K562 (cell line): ENCODE measurements at regions of chr1 and their contacts with region 1.

Region 1: DNA sequence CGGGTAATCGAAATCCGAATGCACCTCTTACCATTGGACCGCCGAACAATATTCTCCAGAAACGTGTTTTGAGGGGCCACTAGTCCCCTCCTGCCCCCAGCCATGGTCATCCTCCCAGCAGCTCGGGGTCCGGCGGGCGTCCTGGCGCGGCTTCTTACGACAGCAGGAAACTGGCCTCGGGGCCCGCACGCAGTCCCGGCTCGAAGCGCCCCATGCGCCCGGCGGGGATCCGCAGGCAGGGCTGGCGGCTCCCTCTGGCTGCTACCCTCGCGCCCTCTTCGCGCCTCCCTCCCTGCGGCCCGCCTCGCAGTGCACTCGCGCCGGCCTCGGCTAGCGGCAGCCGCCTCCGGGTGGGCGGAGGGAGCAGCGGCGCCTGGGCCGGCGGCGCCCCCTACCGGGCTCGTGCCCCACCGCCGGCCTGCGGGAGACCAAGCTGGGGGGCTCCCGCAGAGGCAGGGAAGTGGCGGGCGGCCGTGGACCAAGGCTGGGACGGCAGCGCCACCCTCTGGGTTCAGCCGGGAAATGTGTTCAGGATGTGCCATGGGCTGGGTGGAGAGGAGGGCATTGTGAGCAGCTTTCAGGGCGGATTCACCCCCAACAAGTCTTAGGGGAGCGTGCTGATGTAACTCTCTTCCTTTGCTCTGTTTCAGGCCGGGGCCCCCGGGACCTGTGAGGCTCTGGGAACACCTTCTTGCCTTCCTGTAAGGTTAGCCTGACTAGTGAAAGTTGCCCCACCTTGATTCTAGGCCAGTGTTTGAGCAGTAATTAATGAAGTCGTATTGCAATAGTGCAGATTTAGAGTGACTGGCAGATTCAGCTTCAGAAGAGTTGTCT is at the start of gene KCNH1:
- DNase-seq: peak; percentile 91 to 95 (median 94)
- ATAC-seq: peak; percentile 100
- H3K4me3 ChIP-seq: 0 out of 2 replicates have a peak within 1 kb of the TSS, but pooled peaks have one; percentile 17
- H3K27ac ChIP-seq: no peak within 1 kb of the TSS
- H3K4me1 ChIP-seq: peaks cover 0 to 12% of the 10 kb centered on the region in 2 experiments; a peak in 2 of 5 replicates
- H3K27me3 ChIP-seq: peaks cover 8 to 12% of the 10 kb centered on the region in 2 experiments
- CTCF ChIP-seq: peak; percentile 96 to 98 (median 97)
- EP300 ChIP-seq: no peak
- POLR2A ChIP-seq: no peak
- RAD21 ChIP-seq: peak; percentile 98 to 99
- polyA plus RNA-seq, gene KCNH1: not detected

Region 2: GRCh38 chr1:209860293-209860881 is 1273.7 kb before region 1 on chr1:
- CTCF ChIA-PET with region 1: interaction called, 5 read pairs
- POLR2A ChIA-PET with region 1: no interaction called
- in situ Hi-C with region 1: loop called (anchors 25 kb)
- intact Hi-C with region 1: no loop called
- DNase-seq: peak; percentile 84 to 92 (median 91)
- ATAC-seq: peak; percentile 99
- H3K4me3 ChIP-seq: no peak overlapping the region
- H3K27ac ChIP-seq: no peak overlapping the region
- H3K4me1 ChIP-seq: no peaks in the 10 kb centered on the region
- H3K27me3 ChIP-seq: peaks cover 2 to 14% of the 10 kb centered on the region in 2 experiments; a peak in 3 of 5 replicates
- CTCF ChIP-seq: peak; percentile 89 to 94 (median 91)
- EP300 ChIP-seq: no peak
- POLR2A ChIP-seq: no peak
- RAD21 ChIP-seq: peak; percentile 92 to 96

Region 3: GRCh38 chr1:210407207-210407886 is 726.7 kb before region 1 on chr1:
- CTCF ChIA-PET with region 1: interaction called, 18 read pairs
- POLR2A ChIA-PET with region 1: no interaction called
- in situ Hi-C with region 1: loop called (anchors 10 kb)
- intact Hi-C with region 1: loop called (anchors 1 kb)
- DNase-seq: peak; percentile 68 to 75 (median 71)
- ATAC-seq: peak; percentile 91
- H3K4me3 ChIP-seq: no peak overlapping the region
- H3K27ac ChIP-seq: no peak overlapping the region
- H3K4me1 ChIP-seq: no peaks in the 10 kb centered on the region
- H3K27me3 ChIP-seq: no peaks in the 10 kb centered on the region; a peak in 1 of 5 replicates
- CTCF ChIP-seq: peak; percentile 77 to 89 (median 89)
- EP300 ChIP-seq: no peak
- POLR2A ChIP-seq: no peak
- RAD21 ChIP-seq: peak; percentile 74 to 87

Region 4: DNA sequence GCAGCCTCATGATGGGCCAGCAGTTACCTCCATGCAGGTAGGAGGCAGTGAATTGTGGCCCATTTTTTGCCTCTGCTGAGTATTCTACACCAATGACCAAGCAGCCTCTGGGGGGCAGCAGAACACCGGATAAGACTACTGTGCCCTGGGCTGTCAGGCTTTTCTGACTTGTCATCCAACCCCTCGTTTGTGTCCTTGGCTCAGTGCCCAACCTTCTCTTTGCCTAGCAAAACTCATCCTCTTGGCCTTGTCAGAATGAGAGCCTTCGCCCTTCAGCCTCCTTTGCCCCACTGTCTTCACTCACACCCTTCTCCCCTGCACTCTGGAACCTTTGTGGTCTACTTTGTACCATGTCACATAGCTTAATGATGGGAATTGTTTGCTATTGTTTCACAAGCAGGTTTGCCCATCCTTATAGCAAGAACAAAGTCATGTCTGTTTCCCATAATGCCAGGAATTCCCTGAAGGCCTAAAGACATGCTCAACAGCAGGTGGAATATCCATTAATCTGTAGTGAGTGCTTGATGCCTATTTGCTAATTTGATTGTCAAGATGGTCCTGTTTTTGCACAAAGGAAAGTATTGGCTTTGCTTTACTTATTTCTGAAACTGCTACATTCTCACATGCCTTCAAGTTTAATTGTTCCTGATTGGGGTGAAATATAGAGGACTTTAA is 549.5 kb before region 1 on chr1:
- CTCF ChIA-PET with region 1: interaction called, 26 read pairs
- POLR2A ChIA-PET with region 1: no interaction called
- in situ Hi-C with region 1: no loop called
- intact Hi-C with region 1: loop called (anchors 1 kb)
- DNase-seq: peak; percentile 67 to 84 (median 74)
- ATAC-seq: peak; percentile 99
- H3K4me3 ChIP-seq: no peak overlapping the region
- H3K27ac ChIP-seq: no peak overlapping the region
- H3K4me1 ChIP-seq: no peaks in the 10 kb centered on the region; a peak in 1 of 5 replicates
- H3K27me3 ChIP-seq: no peaks in the 10 kb centered on the region
- CTCF ChIP-seq: peak; percentile 73 to 84 (median 80)
- EP300 ChIP-seq: no peak
- POLR2A ChIP-seq: no peak
- RAD21 ChIP-seq: peak; percentile 86 to 89

Region 5: DNA sequence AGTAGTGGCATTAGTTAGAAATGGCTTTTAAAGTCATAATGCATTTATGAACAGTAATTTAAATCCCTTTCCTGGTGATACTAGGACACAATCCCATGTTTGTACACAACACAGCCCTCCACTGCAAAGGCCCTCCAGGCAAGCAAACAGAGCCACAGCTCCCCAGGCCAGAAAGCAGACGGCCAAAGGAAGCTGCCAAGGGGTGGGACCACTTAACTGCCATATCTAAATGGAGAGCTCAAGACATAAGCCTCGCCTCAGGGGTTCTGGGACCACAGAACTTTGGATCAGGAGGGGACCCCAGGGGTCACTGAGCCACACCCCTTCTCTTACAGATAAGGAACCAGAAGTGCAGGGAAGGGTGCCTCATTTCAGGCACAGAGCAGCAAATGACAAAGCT is 189.8 kb before region 1 on chr1:
- CTCF ChIA-PET with region 1: no interaction called
- POLR2A ChIA-PET with region 1: no interaction called
- in situ Hi-C with region 1: no loop called
- intact Hi-C with region 1: loop called (anchors 10 kb)
- DNase-seq: no peak
- ATAC-seq: no peak
- H3K4me3 ChIP-seq: no peak overlapping the region
- H3K27ac ChIP-seq: no peak overlapping the region
- H3K4me1 ChIP-seq: no peaks in the 10 kb centered on the region
- H3K27me3 ChIP-seq: peaks cover 0 to 5% of the 10 kb centered on the region in 2 experiments; a peak in 2 of 5 replicates
- CTCF ChIP-seq: no peak
- EP300 ChIP-seq: no peak
- POLR2A ChIP-seq: no peak
- RAD21 ChIP-seq: no peak

Region 6: DNA sequence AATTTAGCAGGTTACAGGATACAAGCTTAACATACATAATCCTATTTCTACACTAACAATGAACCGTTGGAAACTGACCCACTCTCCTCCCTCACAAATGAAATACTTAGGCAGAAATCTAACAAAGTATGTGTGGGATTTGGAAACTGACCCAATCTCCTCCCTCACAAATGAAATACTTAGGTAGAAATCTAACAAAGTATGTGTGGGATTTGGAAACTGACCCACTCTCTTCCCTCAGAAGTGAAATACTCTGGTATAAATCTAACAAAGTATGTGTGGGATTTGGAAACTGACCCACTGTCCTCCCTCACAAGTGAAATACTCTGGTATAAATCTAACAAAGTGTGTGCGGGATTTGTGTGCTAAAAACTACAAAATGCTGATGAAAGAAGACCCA is 252.9 kb after region 1 on chr1:
- CTCF ChIA-PET with region 1: no interaction called
- POLR2A ChIA-PET with region 1: no interaction called
- in situ Hi-C with region 1: no loop called
- intact Hi-C with region 1: no loop called
- DNase-seq: no peak
- ATAC-seq: no peak
- H3K4me3 ChIP-seq: no peak overlapping the region
- H3K27ac ChIP-seq: no peak overlapping the region
- H3K4me1 ChIP-seq: peaks cover under 1 to 4% of the 10 kb centered on the region in 2 experiments; a peak in 2 of 5 replicates
- H3K27me3 ChIP-seq: no peaks in the 10 kb centered on the region
- CTCF ChIP-seq: no peak
- EP300 ChIP-seq: no peak
- POLR2A ChIP-seq: no peak
- RAD21 ChIP-seq: no peak

Region 7: GRCh38 chr1:211476200-211476849 is 342.3 kb after region 1 on chr1:
- CTCF ChIA-PET with region 1: no interaction called
- POLR2A ChIA-PET with region 1: no interaction called
- in situ Hi-C with region 1: no loop called
- intact Hi-C with region 1: loop called (anchors 10 kb)
- DNase-seq: peak; percentile 77 to 87 (median 80)
- ATAC-seq: peak; percentile 91
- H3K4me3 ChIP-seq: no peak overlapping the region
- H3K27ac ChIP-seq: no peak overlapping the region
- H3K4me1 ChIP-seq: peaks cover 5 to 11% of the 10 kb centered on the region in 2 experiments; a peak in 3 of 5 replicates
- H3K27me3 ChIP-seq: peaks cover 29 to 36% of the 10 kb centered on the region in 2 experiments
- CTCF ChIP-seq: peak; percentile 89 to 92 (median 90)
- EP300 ChIP-seq: no peak
- POLR2A ChIP-seq: no peak
- RAD21 ChIP-seq: peak; percentile 78 to 81